ENCODE measurements at regions of chr16 and their contacts with region 1.

Region 1: DNA sequence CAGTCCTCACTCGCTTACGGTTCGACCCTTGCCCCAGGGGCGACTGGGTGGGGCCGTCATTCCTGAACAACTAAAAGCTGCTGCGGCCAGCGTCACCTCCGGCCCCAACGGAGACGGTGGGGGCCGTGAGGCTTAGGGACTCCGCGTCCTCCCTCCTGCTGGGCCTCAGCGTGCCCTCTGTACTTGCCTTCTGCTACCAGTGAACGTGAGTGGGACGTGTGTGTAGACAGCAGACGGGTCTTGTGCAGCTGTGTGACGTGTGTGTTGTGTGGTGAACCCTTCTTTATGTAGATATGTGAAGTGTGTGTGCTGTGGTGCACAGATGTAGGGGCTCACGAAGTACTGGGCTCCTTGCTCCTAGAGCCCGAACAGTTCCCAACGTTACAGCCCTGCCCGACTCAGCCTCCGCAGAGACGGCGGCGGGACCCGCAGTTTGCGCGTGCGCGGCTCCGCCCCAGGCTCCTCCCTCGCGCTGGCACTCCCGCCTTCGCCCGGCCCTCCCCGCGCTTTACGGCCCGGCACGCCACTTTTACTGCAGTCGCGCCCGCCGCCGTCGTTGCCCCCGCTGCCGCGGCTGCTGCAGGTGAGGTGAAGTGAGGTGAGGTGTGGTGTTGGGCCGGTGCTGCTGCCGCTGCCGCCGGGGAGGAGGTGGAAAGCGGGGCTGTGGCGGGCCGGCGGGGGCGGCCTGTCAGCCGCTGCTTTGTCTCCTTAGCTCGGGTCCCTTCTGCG is at the start of gene PHAF1:
- DNase-seq: peak; percentile 92 to 99 (median 96)

Region 2: GRCh38 chr16:67028555-67029248 is 80.9 kb before region 1 on chr16 and contains the start of gene CBFB:
- intact Hi-C with region 1: loop called (anchors 5 kb)
- DNase-seq: peak; percentile 86 to 98 (median 89)

Region 3: GRCh38 chr16:67480833-67481560 is 371.4 kb after region 1 on chr16 and contains the start of gene ATP6V0D1:
- intact Hi-C with region 1: no loop called
- DNase-seq: peak; percentile 95 to 99 (median 98)

Measured in posterior cingulate gyrus (tissue), 11 donors.